ENCODE measurements at regions of chr17 and their contacts with region 1.

Region 1: DNA sequence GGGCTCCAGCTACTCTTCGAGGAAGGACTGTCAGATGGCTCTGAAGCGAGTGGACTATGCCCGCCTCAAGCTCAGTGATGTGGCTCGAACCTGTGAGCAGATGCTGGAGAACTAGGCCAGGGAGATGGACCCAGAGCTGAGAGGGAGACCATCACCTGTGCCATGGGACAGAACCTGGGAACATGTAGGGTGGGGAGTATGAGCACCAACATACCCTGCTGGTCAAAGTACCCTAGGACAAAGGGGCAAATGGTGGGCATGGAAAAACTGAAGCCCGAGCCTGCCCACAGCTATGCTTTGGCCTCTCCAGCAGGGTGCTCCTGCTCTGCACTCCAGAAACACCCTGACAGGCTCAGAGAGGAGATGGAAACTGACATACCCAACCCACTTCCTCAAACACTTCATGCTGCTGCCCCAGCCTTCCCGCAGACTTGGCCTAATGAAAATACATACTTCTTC is 1.9 kb downstream of the MED11 start:
- DNase-seq: peak; percentile 90 to 95 (median 91)
- H3K4me3 ChIP-seq: peak overlapping the region in 1 of 3 experiments; percentile 80
- H3K4me3 Mint-ChIP-seq: peak overlapping the region; percentile 26 to 45
- H3K27ac ChIP-seq: peak overlapping the region; percentile 90 to 96
- H3K27ac Mint-ChIP-seq: peak overlapping the region; percentile 97 to 99 (median 99)
- H3K4me1 ChIP-seq: peaks cover 68 to 78% of the 10 kb centered on the region in 2 donors
- H3K4me1 Mint-ChIP-seq: peaks cover 74% of the 10 kb centered on the region
- H3K27me3 ChIP-seq: peaks cover 0 to 5% of the 10 kb centered on the region in 2 donors
- H3K27me3 Mint-ChIP-seq: peaks cover 3 to 16% (median 9%) of the 10 kb centered on the region in 3 donors
- CTCF ChIP-seq: peak; percentile 85

Region 2: GRCh38 chr17:4658478-4659305 is 74.4 kb before region 1 on chr17:
- intact Hi-C with region 1: no loop called
- DNase-seq: peak in 1 of 3 donors; percentile 16
- H3K4me3 ChIP-seq: no peak overlapping the region
- H3K4me3 Mint-ChIP-seq: no peak overlapping the region
- H3K27ac ChIP-seq: no peak overlapping the region
- H3K27ac Mint-ChIP-seq: no peak overlapping the region
- H3K4me1 ChIP-seq: peaks cover 0 to 6% of the 10 kb centered on the region in 2 donors
- H3K4me1 Mint-ChIP-seq: peaks cover 7% of the 10 kb centered on the region
- H3K27me3 ChIP-seq: no peaks in the 10 kb centered on the region
- H3K27me3 Mint-ChIP-seq: peaks cover 1 to 19% (median 4%) of the 10 kb centered on the region in 3 donors
- CTCF ChIP-seq: no peak

Region 3: GRCh38 chr17:4709794-4710692 is 23.1 kb before region 1 on chr17 and contains the start of gene ARRB2:
- intact Hi-C with region 1: loop called in 1 of 2 experiments (anchors 2 kb)
- DNase-seq: peak; percentile 97 to 99 (median 98)
- H3K4me3 ChIP-seq: peak within 1 kb of the TSS; percentile 74 to 99 (median 93)
- H3K4me3 Mint-ChIP-seq: peak within 1 kb of the TSS; percentile 97 to 98
- H3K27ac ChIP-seq: peak within 1 kb of the TSS; percentile 93 to 98
- H3K27ac Mint-ChIP-seq: peak within 1 kb of the TSS; percentile 97 to 99 (median 99)
- H3K4me1 ChIP-seq: peaks cover 44 to 50% of the 10 kb centered on the region in 2 donors
- H3K4me1 Mint-ChIP-seq: peaks cover 46% of the 10 kb centered on the region
- H3K27me3 ChIP-seq: no peaks in the 10 kb centered on the region
- H3K27me3 Mint-ChIP-seq: peaks cover 0 to 4% (median 0%) of the 10 kb centered on the region in 3 donors
- CTCF ChIP-seq: peak; percentile 82
- polyA plus RNA-seq, gene ARRB2: 134 to 760 (median 150) TPM

Region 4: DNA sequence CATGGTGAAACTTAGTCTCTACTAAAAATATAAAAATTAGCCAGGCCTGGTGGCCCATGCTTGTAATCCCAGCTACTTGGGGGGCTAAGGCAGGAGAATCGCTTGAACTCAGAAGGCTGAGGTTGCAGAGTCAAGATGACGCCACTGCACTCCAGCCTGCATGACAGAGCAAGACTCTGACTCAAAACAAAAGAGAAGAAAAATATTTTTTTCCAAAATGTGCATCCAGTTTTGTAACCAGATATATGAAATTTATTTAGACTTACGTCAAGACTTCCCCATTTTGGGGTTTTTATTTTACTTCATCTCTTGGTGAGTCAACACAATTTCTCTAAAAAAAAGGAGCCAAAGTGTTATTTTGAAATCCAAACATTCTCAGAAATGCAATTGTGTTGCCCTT is 33.1 kb after region 1 on chr17:
- intact Hi-C with region 1: loop called (anchors 1 to 5 kb)
- DNase-seq: peak; percentile 88 to 96 (median 94)
- H3K4me3 ChIP-seq: no peak overlapping the region
- H3K4me3 Mint-ChIP-seq: peak overlapping the region in 1 of 2 donors; percentile 51
- H3K27ac ChIP-seq: peak overlapping the region; percentile 98
- H3K27ac Mint-ChIP-seq: peak overlapping the region; percentile 98 to 99 (median 99)
- H3K4me1 ChIP-seq: peaks cover 73 to 81% of the 10 kb centered on the region in 2 donors
- H3K4me1 Mint-ChIP-seq: peaks cover 58% of the 10 kb centered on the region
- H3K27me3 ChIP-seq: no peaks in the 10 kb centered on the region
- H3K27me3 Mint-ChIP-seq: peaks cover 0 to 8% (median 2%) of the 10 kb centered on the region in 3 donors
- CTCF ChIP-seq: no peak

Region 5: DNA sequence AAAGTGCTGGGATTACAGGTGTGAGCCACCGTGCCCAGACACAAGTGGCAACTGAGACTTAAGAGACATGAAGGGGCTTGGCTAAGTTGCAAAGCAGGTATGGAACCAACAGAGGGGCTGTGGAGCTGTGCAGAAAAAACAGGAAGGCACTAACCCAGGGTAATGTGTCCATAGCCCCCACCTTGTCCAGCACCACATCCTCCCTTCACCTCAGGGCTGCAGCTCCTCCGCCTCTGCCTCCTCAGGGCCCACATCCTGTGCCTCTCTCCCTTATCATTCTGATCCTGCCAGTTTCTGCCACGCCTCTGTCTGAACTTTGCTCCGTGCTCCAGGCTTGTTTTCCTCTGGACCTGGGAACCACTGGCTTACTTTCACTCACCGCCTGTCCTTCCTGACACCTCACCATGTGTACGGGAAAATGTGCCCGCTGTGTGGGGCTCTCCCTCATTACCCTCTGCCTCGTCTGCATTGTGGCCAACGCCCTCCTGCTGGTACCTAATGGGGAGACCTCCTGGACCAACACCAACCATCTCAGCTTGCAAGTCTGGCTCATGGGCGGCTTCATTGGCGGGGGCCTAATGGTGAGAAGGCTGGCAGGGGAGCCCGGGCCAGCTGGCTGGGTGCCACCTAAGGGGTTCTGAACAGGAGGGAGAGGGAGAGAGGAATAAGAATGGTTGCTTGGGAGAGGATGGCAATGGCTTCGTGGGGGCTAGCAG is 38.6 kb after region 1 on chr17 and contains the start of gene TM4SF5:
- intact Hi-C with region 1: loop called (anchors 1 to 5 kb)
- DNase-seq: no peak
- H3K4me3 ChIP-seq: no peak within 1 kb of the TSS
- H3K4me3 Mint-ChIP-seq: peak within 1 kb of the TSS in 1 of 2 donors; percentile 42
- H3K27ac ChIP-seq: peak within 1 kb of the TSS; percentile 51 to 98
- H3K27ac Mint-ChIP-seq: peak within 1 kb of the TSS; percentile 86 to 97 (median 94)
- H3K4me1 ChIP-seq: peaks cover 46 to 52% of the 10 kb centered on the region in 2 donors
- H3K4me1 Mint-ChIP-seq: peaks cover 45% of the 10 kb centered on the region
- H3K27me3 ChIP-seq: no peaks in the 10 kb centered on the region
- H3K27me3 Mint-ChIP-seq: peaks cover 4 to 31% (median 25%) of the 10 kb centered on the region in 3 donors
- CTCF ChIP-seq: no peak
- polyA plus RNA-seq, gene TM4SF5: not detected

Region 6: DNA sequence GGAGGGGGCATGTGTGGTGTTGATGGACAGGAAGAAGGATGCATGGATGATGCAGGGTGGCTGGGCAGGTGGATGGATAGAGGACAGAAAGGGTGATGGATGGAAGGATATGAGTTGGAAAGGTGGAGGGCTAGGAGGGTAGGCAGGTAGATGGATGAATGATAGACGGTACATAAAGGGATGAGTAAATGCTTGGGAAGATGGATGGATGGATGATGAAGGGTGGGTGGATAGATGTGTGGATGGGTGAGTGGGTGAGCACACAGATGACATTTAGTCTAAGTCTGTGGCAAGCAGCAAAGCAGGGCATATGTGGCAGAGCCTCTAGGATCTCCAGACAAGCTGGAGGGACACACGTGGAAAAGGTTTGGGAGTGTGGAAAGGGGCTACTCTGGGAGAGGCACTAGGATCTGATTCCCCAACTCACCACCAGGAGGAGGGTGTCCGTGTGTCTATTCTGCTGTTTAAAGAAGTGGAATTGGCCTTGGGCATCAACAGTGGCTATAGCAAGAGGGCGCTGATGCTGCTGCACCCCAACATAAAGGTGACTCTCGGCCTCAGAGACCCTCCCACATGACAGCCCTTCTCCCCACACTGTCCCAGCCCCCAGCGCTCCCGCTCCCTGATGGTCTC is 82.1 kb after region 1 on chr17:
- intact Hi-C with region 1: no loop called
- DNase-seq: no peak
- H3K4me3 ChIP-seq: no peak overlapping the region
- H3K4me3 Mint-ChIP-seq: no peak overlapping the region
- H3K27ac ChIP-seq: no peak overlapping the region
- H3K27ac Mint-ChIP-seq: peak overlapping the region in 1 of 7 donors; percentile 17
- H3K4me1 ChIP-seq: no peaks in the 10 kb centered on the region
- H3K4me1 Mint-ChIP-seq: peaks cover 5% of the 10 kb centered on the region
- H3K27me3 ChIP-seq: no peaks in the 10 kb centered on the region
- H3K27me3 Mint-ChIP-seq: peaks cover 3 to 14% (median 7%) of the 10 kb centered on the region in 3 donors
- CTCF ChIP-seq: no peak